ENCODE measurements at regions of chr1 and their contacts with region 1.

Region 1: DNA sequence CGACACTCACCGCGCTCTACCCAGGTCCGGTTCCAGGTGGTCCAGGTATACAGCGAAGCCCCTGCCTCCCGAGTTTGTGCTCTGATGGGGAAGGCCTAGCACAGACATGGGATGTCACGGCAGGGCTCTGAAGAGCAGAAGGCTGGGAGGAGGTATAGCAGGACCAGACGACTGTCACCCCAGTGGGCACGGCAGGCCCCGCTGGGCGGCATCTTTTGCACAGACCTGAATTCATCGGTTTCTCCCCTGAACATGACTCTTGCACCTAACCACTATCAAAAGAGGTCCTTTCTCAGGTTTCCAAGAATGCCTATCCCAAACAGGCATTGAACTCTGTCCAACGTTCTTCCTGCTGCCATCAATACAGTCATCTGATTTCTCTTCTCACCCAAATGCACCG is 30.6 kb downstream of the ARHGEF16 start:
- DNase-seq: no peak
- ATAC-seq: no peak
- H3K4me3 ChIP-seq: no peak overlapping the region
- H3K27ac ChIP-seq: no peak overlapping the region
- H3K4me1 ChIP-seq: peaks cover 0 to 12% (median 4%) of the 10 kb centered on the region in 4 donors
- H3K27me3 ChIP-seq: no peaks in the 10 kb centered on the region
- CTCF ChIP-seq: no peak
- POLR2A ChIP-seq: no peak

Region 2: GRCh38 chr1:3453203-3453761 is 31.7 kb before region 1 on chr1:
- intact Hi-C with region 1: loop called in 1 of 2 experiments (anchors 5 kb)
- DNase-seq: peak; percentile 76 to 83 (median 76)
- ATAC-seq: peak; percentile 83 to 86 (median 85)
- H3K4me3 ChIP-seq: no peak overlapping the region
- H3K27ac ChIP-seq: no peak overlapping the region
- H3K4me1 ChIP-seq: peaks cover 0 to 10% (median 3%) of the 10 kb centered on the region in 4 donors
- H3K27me3 ChIP-seq: no peaks in the 10 kb centered on the region
- CTCF ChIP-seq: peak; percentile 93 to 98 (median 96)
- POLR2A ChIP-seq: no peak